Heart right ventricle (tissue), 16 donors: ENCODE measurements at regions of chr11 and their contacts with region 1.

Region 1: GRCh38 chr11:355581-356458 is 13.5 kb upstream of the B4GALNT4 start:
- DNase-seq: peak; percentile 95 to 97
- ATAC-seq: peak; percentile 86 to 95 (median 92)
- H3K4me3 ChIP-seq: peak overlapping the region in 9 of 10 donors; percentile 28 to 52 (median 47)
- H3K27ac ChIP-seq: peak overlapping the region; percentile 93 to 100 (median 98)
- H3K4me1 ChIP-seq: peaks cover 5 to 45% (median 35%) of the 10 kb centered on the region in 9 donors
- H3K27me3 ChIP-seq: no peaks in the 10 kb centered on the region
- CTCF ChIP-seq: no peak

Region 2: GRCh38 chr11:207208-207862 is 148.5 kb before region 1 on chr11 and contains the starts of genes BET1L and RIC8A:
- intact Hi-C with region 1: loop called in 5 of 10 experiments (anchors 5 to 10 kb)
- DNase-seq: peak; percentile 94 to 96
- ATAC-seq: peak; percentile 89 to 95 (median 93)
- H3K4me3 ChIP-seq: peak within 1 kb of the TSS; percentile 79 to 96 (median 90)
- H3K27ac ChIP-seq: peak within 1 kb of the TSS; percentile 96 to 100 (median 98)
- H3K4me1 ChIP-seq: peaks cover 20 to 64% (median 39%) of the 10 kb centered on the region in 9 donors
- H3K27me3 ChIP-seq: no peaks in the 10 kb centered on the region
- CTCF ChIP-seq: no peak
- total RNA-seq, gene BET1L: 18.7 to 32.0 (median 20.7) TPM
- total RNA-seq, gene RIC8A: 38.4 to 82.1 (median 59.5) TPM

Region 3: GRCh38 chr11:269146-269890 is 86.5 kb before region 1 on chr11:
- intact Hi-C with region 1: no loop called
- DNase-seq: no peak
- ATAC-seq: peak in 7 of 8 donors; percentile 32 to 63 (median 49)
- H3K4me3 ChIP-seq: peak overlapping the region in 4 of 10 donors; percentile 11 to 55 (median 36)
- H3K27ac ChIP-seq: peak overlapping the region in 8 of 10 donors; percentile 9 to 97 (median 57)
- H3K4me1 ChIP-seq: peaks cover 0 to 35% (median 0%) of the 10 kb centered on the region in 9 donors
- H3K27me3 ChIP-seq: peaks cover 0 to 32% (median 15%) of the 10 kb centered on the region in 7 donors
- CTCF ChIP-seq: no peak

Region 4: GRCh38 chr11:304915-305843 is 50.6 kb before region 1 on chr11:
- intact Hi-C with region 1: loop called in 5 of 10 experiments (anchors 2 to 10 kb)
- DNase-seq: peak; percentile 58 to 79
- ATAC-seq: peak in 5 of 8 donors; percentile 11 to 34 (median 24)
- H3K4me3 ChIP-seq: peak overlapping the region in 1 of 10 donors; percentile 9
- H3K27ac ChIP-seq: peak overlapping the region in 6 of 10 donors; percentile 15 to 97 (median 87)
- H3K4me1 ChIP-seq: peaks cover 5 to 51% (median 25%) of the 10 kb centered on the region in 9 donors
- H3K27me3 ChIP-seq: peaks cover 0 to 25% (median 6%) of the 10 kb centered on the region in 7 donors
- CTCF ChIP-seq: peak; percentile 47 to 79 (median 67)

Region 5: GRCh38 chr11:328012-328411 is 27.8 kb before region 1 on chr11:
- intact Hi-C with region 1: loop called in 1 of 10 experiments (anchors 2 kb)
- DNase-seq: no peak
- ATAC-seq: no peak
- H3K4me3 ChIP-seq: no peak overlapping the region
- H3K27ac ChIP-seq: peak overlapping the region in 8 of 10 donors; percentile 90 to 98 (median 96)
- H3K4me1 ChIP-seq: peaks cover 15 to 56% (median 39%) of the 10 kb centered on the region in 9 donors
- H3K27me3 ChIP-seq: no peaks in the 10 kb centered on the region
- CTCF ChIP-seq: no peak